AG04450 (cell line): ENCODE measurements at regions of chr1 and their contacts with region 1.

Region 1: DNA sequence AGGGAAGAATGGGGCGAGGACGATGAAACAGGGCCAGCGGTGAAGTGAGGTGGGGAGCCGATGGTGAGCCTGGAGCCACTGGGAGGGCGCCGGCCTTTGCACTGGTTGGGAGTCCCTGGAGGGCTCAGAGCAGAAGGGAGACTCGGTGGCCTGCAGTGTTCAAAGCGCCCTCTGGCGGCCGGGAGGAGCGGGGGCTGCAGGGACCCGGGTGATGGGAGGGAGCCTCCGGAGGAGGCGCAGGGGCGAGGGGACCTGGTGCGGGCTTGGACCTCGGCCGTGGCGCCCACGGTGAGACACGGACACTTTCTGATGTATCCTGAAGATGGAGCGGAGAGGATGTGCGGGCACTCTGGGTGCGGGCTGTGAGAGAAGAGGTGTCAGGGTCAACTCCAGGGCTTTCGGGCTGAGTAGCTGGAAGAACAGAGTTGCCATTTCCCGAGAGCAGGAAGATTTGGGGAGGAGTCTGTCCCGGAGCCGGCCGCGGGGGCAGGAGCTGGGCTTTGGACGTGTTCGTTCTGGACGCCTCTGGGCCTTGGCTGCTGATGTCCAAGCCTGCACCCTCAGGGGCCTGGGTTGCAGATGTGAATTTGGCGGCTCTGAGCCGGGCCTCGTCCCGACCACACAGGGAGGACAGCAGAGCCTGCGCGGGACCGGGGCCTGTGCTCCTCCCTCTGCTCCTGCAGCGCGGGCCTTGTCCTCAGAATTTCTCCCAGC is 29.7 kb downstream of the HEYL start:
- DNase-seq: no peak
- H3K4me3 ChIP-seq: no peak overlapping the region
- H3K27ac ChIP-seq: no peak overlapping the region
- H3K27me3 ChIP-seq: no peaks in the 10 kb centered on the region
- CTCF ChIP-seq: peak; percentile 59

Region 2: DNA sequence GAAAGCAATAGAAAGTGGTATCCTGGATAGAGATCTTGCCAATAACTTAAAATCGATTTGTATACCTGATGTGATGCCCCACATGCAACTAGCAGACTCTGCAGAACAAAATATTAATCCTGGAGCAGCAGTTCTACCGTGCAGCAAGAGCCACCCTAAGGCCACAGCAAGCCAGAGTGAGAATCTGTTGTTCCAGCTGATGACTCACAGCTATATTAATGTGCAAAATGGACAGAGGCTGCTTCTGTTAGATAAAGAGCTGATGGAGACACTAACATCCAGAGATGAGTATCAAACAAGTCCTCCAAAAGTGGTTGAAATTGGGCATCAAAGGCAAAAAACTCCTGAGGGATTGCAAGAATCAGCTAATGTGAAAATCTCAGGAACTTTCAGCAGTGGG is 277.5 kb before region 1 on chr1:
- CTCF ChIA-PET with region 1: no interaction called
- POLR2A ChIA-PET with region 1: no interaction called
- DNase-seq: no peak
- H3K4me3 ChIP-seq: no peak overlapping the region
- H3K27ac ChIP-seq: no peak overlapping the region
- H3K27me3 ChIP-seq: no peaks in the 10 kb centered on the region
- CTCF ChIP-seq: no peak

Region 3: GRCh38 chr1:39575191-39576015 is 34.4 kb before region 1 on chr1:
- CTCF ChIA-PET with region 1: interaction called, 14 read pairs
- POLR2A ChIA-PET with region 1: no interaction called
- DNase-seq: no peak
- H3K4me3 ChIP-seq: peak overlapping the region; percentile 83
- H3K27ac ChIP-seq: peak overlapping the region; percentile 61
- H3K27me3 ChIP-seq: no peaks in the 10 kb centered on the region
- CTCF ChIP-seq: no peak

Region 4: GRCh38 chr1:39635205-39635870 is 25.6 kb after region 1 on chr1:
- CTCF ChIA-PET with region 1: interaction called, 10 read pairs
- POLR2A ChIA-PET with region 1: no interaction called
- DNase-seq: no peak
- H3K4me3 ChIP-seq: no peak overlapping the region
- H3K27ac ChIP-seq: no peak overlapping the region
- H3K27me3 ChIP-seq: peaks cover 6% of the 10 kb centered on the region
- CTCF ChIP-seq: no peak

Region 5: GRCh38 chr1:39653546-39654031 is 43.8 kb after region 1 on chr1:
- CTCF ChIA-PET with region 1: interaction called, 320 read pairs
- POLR2A ChIA-PET with region 1: interaction called, 4 read pairs
- DNase-seq: peak; percentile 58
- H3K4me3 ChIP-seq: no peak overlapping the region; the same call in 1 of the 2 replicates
- H3K27ac ChIP-seq: no peak overlapping the region
- H3K27me3 ChIP-seq: peaks cover 44% of the 10 kb centered on the region
- CTCF ChIP-seq: peak; percentile 93

Region 6: GRCh38 chr1:39720094-39720999 is 110.6 kb after region 1 on chr1:
- CTCF ChIA-PET with region 1: interaction called, 76 read pairs
- POLR2A ChIA-PET with region 1: no interaction called
- DNase-seq: peak; percentile 27
- H3K4me3 ChIP-seq: no peak overlapping the region
- H3K27ac ChIP-seq: no peak overlapping the region
- H3K27me3 ChIP-seq: peaks cover 27% of the 10 kb centered on the region
- CTCF ChIP-seq: peak; percentile 60

Region 7: DNA sequence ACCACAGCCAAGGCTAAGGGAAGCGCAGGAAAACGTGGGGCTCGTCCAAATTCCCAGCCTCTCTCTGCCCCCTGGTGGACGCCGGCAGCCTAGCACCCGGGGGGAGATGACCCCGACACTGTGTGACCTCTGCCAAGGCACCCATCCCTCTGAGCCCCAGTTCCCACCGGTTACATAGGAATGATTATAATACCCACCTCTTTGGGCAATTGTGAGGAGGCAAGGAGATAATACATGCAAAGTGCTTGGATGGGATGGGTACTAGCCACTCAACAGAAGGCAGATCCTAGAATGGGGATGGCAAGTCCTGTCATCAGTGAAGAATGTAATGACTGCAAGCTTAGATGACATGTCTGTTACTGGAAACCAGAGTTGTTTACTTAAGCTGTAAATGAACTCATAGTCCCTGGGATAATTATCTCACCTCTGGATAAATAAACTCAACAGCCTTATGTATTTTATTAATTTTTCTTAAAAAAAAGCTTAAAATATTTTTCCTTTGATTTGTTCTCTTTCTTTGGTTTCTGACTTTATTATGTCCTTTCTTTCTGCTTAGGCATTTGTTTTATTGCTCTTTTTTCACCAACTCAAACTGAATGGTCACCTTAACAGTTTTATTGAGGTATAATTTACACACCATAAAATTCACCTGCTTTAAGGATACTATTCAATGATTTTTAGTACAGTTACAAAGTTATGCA is 190.1 kb after region 1 on chr1:
- CTCF ChIA-PET with region 1: interaction called, 13 read pairs
- POLR2A ChIA-PET with region 1: no interaction called
- DNase-seq: peak; percentile 33
- H3K4me3 ChIP-seq: no peak overlapping the region
- H3K27ac ChIP-seq: no peak overlapping the region
- H3K27me3 ChIP-seq: peaks cover 5% of the 10 kb centered on the region
- CTCF ChIP-seq: peak; percentile 77